ENCODE measurements at regions of chr16 and their contacts with region 1.

Region 1: DNA sequence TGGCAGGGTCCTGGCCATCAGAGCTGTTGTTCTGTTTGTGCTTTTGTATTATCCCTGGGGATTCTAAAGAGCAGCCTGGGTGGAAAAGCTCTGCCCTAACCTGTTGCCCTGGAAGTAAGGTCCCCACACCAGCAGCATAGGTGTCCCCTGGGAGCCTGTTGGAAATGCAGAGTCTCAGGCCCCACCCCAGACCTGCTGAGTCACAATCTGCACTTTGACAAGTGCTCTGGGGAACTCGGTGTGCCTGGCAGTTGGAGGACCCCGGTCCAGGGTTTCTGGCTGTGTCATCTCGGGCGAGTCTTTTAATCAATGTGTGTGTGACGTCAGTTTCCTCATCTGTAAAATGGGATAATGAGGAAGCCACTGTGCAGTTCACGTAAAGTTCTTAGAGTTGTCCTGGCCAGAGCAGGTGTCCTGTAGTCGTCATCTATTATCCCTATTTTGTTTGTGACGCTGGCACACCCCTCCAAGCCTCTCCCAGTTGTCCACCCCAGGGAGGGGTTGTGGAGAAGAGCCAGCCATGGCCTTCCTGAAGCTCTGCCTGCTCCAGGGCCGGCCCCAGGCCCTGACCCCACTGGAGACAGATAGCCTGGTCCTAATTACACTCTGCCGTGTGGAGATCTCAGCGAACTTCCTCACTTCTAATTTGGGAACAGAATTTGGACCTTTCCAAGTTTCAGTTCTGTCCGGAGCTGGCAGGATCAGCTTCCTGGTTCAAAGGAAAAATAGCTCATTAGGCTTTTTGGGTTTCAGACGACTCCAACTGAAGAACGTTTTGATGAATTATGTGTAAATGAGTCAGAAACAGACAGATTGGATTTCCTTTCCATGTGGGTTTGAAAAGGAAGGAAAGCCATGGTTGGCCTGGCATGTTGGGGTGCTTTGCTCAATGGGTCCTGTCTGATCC is 295.7 kb upstream of the FOXF1 start:
- DNase-seq: no peak
- H3K4me3 ChIP-seq: no peak overlapping the region
- H3K27ac ChIP-seq: peak overlapping the region; percentile 41 to 74 (median 66)
- H3K4me1 ChIP-seq: peaks cover 9 to 52% (median 36%) of the 10 kb centered on the region in 4 donors
- H3K27me3 ChIP-seq: no peaks in the 10 kb centered on the region
- CTCF ChIP-seq: no peak
- EP300 ChIP-seq: no peak
- POLR2A ChIP-seq: no peak

Region 2: GRCh38 chr16:86072328-86073102 is 142.1 kb before region 1 on chr16:
- intact Hi-C with region 1: loop called (anchors 10 kb)
- DNase-seq: no peak
- H3K4me3 ChIP-seq: no peak overlapping the region
- H3K27ac ChIP-seq: no peak overlapping the region
- H3K4me1 ChIP-seq: peaks cover 0 to 25% (median 8%) of the 10 kb centered on the region in 4 donors
- H3K27me3 ChIP-seq: no peaks in the 10 kb centered on the region
- CTCF ChIP-seq: peak; percentile 80 to 88 (median 84)
- EP300 ChIP-seq: no peak
- POLR2A ChIP-seq: no peak

Region 3: DNA sequence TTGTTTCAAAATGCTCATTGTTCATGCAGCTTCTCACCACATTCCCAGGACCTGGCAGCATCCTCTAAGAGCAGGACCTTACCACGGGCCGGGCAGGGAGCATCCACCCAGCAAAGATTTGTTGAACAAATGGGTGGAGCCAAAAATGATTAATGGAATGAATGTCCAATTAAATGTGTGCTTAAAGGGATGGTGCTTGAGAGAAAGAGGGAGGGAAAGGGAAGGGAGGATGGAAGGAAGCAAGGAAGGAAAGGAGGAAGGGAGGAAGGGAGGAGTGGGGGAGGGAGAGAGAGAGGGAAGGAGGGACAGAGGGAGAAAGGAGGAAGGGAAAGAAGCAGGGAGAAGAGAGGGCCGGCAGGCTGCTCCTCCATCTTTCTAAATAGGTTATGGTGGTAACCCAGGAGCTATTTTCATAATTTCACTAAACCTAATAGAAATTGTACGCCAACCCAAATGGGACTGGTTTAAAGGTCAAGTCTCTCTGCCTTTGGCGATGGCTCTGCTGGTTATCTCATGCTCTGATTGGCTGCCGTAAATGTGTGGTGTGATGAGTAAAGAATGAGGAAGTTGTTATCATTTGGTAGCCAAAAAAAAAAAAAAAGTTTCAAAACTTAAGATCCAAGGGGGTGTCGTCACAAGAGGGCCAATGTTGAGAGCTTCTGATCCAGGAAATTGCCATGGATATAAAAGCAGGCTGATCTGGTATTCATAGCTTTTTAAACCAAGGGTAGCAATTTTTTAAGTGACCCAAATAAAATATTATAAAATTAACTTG is 169.1 kb after region 1 on chr16:
- intact Hi-C with region 1: no loop called
- DNase-seq: no peak
- H3K4me3 ChIP-seq: no peak overlapping the region
- H3K27ac ChIP-seq: peak overlapping the region; percentile 11 to 54 (median 50)
- H3K4me1 ChIP-seq: peaks cover 0 to 14% (median 12%) of the 10 kb centered on the region in 4 donors
- H3K27me3 ChIP-seq: no peaks in the 10 kb centered on the region
- CTCF ChIP-seq: no peak
- EP300 ChIP-seq: no peak
- POLR2A ChIP-seq: no peak